MCF 10A (cell line): ENCODE measurements at regions of chr7 and their contacts with region 1.

Region 1: DNA sequence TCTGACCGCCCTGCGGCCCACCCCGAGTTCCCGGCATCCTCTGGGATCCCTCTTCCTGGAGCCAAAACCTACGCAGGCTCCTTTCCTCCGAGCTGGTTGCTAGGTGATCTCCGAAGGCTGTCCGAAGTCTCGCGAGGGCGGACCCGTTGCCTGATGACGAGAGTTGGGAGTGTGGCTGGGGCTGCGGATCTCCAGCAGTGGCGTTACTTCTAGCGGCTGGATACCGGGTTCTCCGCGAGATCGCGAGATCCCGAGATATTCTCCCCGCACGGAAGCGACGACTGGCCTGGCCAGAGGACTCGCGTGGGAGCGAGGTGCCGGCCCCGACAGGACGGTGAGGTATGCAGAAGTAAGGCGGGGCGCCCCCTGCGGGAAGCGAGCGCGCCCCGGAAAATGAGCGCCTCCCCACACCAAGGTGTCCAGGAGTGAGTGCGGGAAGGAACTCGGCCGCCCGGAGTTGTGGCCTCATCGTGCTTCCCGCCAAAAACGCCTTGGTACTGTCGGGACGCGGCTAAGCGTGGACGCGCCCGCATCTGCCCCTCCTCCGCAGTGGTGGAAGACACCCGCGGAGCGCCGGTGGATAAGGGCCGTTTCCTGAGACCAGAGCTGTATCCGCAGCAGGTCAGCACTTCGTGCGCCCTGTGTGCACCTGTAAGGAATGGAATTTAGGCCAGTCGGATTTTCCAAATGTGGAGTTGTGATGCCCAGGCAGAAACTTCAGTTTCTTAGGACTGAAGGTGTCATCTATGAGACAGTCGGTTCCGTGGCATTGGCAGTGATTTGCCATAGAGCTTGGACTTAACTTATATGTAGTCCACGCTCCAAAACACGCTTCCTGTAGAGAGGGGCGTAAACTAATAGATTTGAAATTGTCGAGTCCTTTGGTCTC is at the start of gene AGBL3:
- DNase-seq: peak; percentile 95
- H3K4me3 Mint-ChIP-seq: peak within 1 kb of the TSS; percentile 99
- H3K27ac Mint-ChIP-seq: peak within 1 kb of the TSS; percentile 97
- H3K4me1 Mint-ChIP-seq: peaks cover 4% of the 10 kb centered on the region
- H3K27me3 Mint-ChIP-seq: no peaks in the 10 kb centered on the region
- CTCF ChIP-seq: peak; percentile 54
- total RNA-seq, gene AGBL3: 1.1 and 1.8 TPM in 2 replicates

Region 2: GRCh38 chr7:134435158-134435920 is 551.3 kb before region 1 on chr7:
- CTCF ChIA-PET with region 1: no interaction called
- POLR2A ChIA-PET with region 1: no interaction called
- intact Hi-C with region 1: no loop called
- DNase-seq: peak; percentile 37
- H3K4me3 Mint-ChIP-seq: no peak overlapping the region
- H3K27ac Mint-ChIP-seq: peak overlapping the region; percentile 88
- H3K4me1 Mint-ChIP-seq: peaks cover 17% of the 10 kb centered on the region
- H3K27me3 Mint-ChIP-seq: no peaks in the 10 kb centered on the region
- CTCF ChIP-seq: no peak

Region 3: GRCh38 chr7:134792968-134793367 is 193.6 kb before region 1 on chr7:
- CTCF ChIA-PET with region 1: no interaction called
- POLR2A ChIA-PET with region 1: no interaction called
- intact Hi-C with region 1: no loop called
- DNase-seq: no peak
- H3K4me3 Mint-ChIP-seq: no peak overlapping the region
- H3K27ac Mint-ChIP-seq: no peak overlapping the region
- H3K4me1 Mint-ChIP-seq: peaks cover 7% of the 10 kb centered on the region
- H3K27me3 Mint-ChIP-seq: no peaks in the 10 kb centered on the region
- CTCF ChIP-seq: no peak

Region 4: DNA sequence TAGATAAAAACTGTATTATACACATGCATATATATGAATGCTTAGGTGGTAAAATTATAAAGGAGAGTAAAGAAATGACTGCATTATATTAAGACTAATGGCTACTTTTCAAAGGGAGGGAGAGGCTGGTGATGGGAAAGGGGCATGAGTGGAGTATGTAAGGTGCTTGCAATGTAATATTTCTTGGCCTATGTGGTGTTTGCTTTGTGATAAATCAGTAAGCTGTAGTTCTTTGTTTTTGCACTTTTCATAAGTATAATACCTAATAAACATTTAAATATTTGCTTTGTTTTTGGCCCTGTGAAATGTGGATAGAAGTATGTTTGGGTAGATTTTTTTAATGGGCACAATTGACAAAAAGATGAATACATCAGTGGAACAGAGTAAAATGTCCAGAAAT is 25.6 kb after region 1 on chr7:
- CTCF ChIA-PET with region 1: no interaction called
- POLR2A ChIA-PET with region 1: no interaction called
- intact Hi-C with region 1: no loop called
- DNase-seq: no peak
- H3K4me3 Mint-ChIP-seq: no peak overlapping the region
- H3K27ac Mint-ChIP-seq: no peak overlapping the region
- H3K4me1 Mint-ChIP-seq: no peaks in the 10 kb centered on the region
- H3K27me3 Mint-ChIP-seq: peaks cover 11% of the 10 kb centered on the region
- CTCF ChIP-seq: no peak

Region 5: GRCh38 chr7:135147899-135148721 is 161.5 kb after region 1 on chr7 and contains the start of gene TMEM140:
- CTCF ChIA-PET with region 1: interaction called, 5 read pairs
- POLR2A ChIA-PET with region 1: interaction called, 12 read pairs
- intact Hi-C with region 1: no loop called
- DNase-seq: peak; percentile 33
- H3K4me3 Mint-ChIP-seq: peak within 1 kb of the TSS; percentile 39
- H3K27ac Mint-ChIP-seq: peak within 1 kb of the TSS; percentile 46
- H3K4me1 Mint-ChIP-seq: peaks cover 7% of the 10 kb centered on the region
- H3K27me3 Mint-ChIP-seq: no peaks in the 10 kb centered on the region
- CTCF ChIP-seq: no peak
- total RNA-seq, gene TMEM140: not detected in 2 replicates

Region 6: DNA sequence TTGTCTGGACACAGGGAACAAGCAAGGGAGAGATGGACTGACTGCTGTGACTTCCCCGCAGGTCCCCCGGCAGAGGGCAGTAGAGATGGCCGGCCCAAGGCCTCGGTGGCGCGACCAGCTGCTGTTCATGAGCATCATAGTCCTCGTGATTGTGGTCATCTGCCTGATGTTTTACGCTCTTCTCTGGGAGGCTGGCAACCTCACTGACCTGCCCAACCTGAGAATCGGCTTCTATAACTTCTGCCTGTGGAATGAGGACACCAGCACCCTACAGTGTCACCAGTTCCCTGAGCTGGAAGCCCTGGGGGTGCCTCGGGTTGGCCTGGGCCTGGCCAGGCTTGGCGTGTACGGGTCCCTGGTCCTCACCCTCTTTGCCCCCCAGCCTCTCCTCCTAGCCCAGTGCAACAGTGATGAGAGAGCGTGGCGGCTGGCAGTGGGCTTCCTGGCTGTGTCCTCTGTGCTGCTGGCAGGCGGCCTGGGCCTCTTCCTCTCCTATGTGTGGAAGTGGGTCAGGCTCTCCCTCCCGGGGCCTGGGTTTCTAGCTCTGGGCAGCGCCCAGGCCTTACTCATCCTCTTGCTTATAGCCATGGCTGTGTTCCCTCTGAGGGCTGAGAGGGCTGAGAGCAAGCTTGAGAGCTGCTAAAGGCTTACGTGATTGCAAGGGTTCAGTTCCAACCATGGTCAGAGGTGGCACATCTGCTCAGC is 177.9 kb after region 1 on chr7:
- CTCF ChIA-PET with region 1: interaction called, 5 read pairs
- POLR2A ChIA-PET with region 1: interaction called, 62 read pairs
- intact Hi-C with region 1: loop called (anchors 5 kb)
- DNase-seq: no peak
- H3K4me3 Mint-ChIP-seq: no peak overlapping the region
- H3K27ac Mint-ChIP-seq: no peak overlapping the region
- H3K4me1 Mint-ChIP-seq: peaks cover 25% of the 10 kb centered on the region
- H3K27me3 Mint-ChIP-seq: no peaks in the 10 kb centered on the region
- CTCF ChIP-seq: no peak

Region 7: DNA sequence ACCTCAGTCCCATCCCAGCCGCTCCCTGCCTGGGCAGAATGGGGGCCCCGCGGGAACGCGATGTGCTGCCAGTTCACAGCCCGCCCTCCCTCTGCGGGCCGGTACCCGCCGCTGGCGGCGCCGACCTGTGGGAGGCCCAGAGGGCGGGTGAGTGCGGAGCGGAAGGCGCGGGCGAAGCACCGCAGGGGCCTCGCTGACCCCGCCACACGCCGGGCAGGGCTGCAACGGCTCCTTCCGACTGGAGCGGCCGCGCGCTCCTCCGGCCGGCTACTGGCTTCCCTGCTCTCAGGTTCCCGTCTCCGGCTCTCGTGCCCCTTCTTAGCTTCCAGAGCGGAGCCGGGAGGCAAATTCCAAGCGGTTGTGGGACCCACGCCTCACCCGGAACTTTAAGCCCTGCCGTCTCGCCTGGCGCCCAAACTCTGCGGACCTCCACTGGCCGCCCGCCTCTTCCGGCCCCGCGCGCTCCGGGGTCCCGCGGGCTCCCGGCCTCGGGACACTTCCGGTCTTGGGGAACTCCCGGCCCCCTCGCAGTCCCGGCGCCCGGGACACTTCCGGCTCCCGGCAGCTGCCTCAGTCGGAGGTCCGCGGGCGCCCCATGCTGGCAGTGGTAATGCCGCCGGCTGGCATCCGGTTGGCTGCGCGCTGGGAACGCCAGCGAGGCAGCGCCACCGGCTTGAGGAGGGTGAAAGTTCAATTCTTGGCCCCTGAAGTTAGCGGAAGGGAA is 183.8 kb after region 1 on chr7 and contains the start of gene CYREN:
- CTCF ChIA-PET with region 1: interaction called, 5 read pairs
- POLR2A ChIA-PET with region 1: interaction called, 62 read pairs
- intact Hi-C with region 1: loop called (anchors 1 kb)
- DNase-seq: peak; percentile 95
- H3K4me3 Mint-ChIP-seq: peak within 1 kb of the TSS; percentile 79
- H3K27ac Mint-ChIP-seq: peak within 1 kb of the TSS; percentile 88
- H3K4me1 Mint-ChIP-seq: peaks cover 34% of the 10 kb centered on the region
- H3K27me3 Mint-ChIP-seq: no peaks in the 10 kb centered on the region
- CTCF ChIP-seq: peak; percentile 44
- total RNA-seq, gene CYREN: 66.0 and 71.0 TPM in 2 replicates

Region 8: GRCh38 chr7:135177021-135177696 is 190.6 kb after region 1 on chr7:
- CTCF ChIA-PET with region 1: interaction called, 3 read pairs
- POLR2A ChIA-PET with region 1: interaction called, 62 read pairs
- intact Hi-C with region 1: no loop called
- DNase-seq: peak; percentile 95
- H3K4me3 Mint-ChIP-seq: peak overlapping the region; percentile 16
- H3K27ac Mint-ChIP-seq: peak overlapping the region; percentile 91
- H3K4me1 Mint-ChIP-seq: peaks cover 36% of the 10 kb centered on the region
- H3K27me3 Mint-ChIP-seq: no peaks in the 10 kb centered on the region
- CTCF ChIP-seq: no peak

Region 9: GRCh38 chr7:135362871-135363270 is 376.3 kb after region 1 on chr7:
- CTCF ChIA-PET with region 1: no interaction called
- POLR2A ChIA-PET with region 1: no interaction called
- intact Hi-C with region 1: no loop called
- DNase-seq: no peak
- H3K4me3 Mint-ChIP-seq: no peak overlapping the region
- H3K27ac Mint-ChIP-seq: no peak overlapping the region
- H3K4me1 Mint-ChIP-seq: no peaks in the 10 kb centered on the region
- H3K27me3 Mint-ChIP-seq: no peaks in the 10 kb centered on the region
- CTCF ChIP-seq: peak; percentile 18